GM12878 (cell line): ENCODE measurements at regions of chr2 and their contacts with region 1.

Region 1: DNA sequence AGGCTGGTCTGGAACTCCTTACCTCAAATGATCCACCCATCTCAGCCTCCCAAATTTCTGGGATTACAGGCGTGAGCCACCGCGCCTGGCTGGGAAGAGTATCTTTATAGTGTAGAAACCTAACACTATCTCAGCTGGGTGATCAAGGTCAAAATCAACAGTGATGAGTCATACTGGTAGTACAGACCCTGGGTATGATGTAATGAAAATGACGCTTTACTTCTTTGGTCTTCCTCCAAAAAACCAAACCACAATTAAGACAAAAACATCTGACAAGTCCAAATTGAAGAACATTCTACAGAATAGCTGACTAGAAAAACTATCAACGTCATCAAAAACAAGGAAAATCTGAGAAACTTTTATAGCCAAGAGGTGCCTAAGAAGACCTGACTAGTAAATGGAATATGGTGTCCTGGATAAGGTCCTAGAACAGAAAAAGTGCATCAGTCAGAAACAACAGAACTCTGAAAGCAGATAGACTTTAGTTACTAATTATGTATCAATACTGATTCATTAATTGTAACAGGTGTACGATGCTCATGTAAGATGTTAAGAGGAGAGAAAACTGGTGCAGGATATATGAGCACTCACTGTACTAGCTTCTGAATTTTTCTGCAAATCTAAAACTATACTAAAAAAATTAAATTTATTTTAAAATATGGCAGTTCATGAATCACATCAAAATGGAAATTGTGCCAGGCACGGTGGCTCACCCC is 25.4 kb downstream of the PDCL3 start:
- DNase-seq: peak; percentile 38
- ATAC-seq: peak; percentile 93
- H3K4me3 ChIP-seq: no peak overlapping the region
- H3K27ac ChIP-seq: no peak overlapping the region
- H3K4me1 ChIP-seq: peaks cover 5% of the 10 kb centered on the region; the same call in 1 of the 2 replicates
- H3K27me3 ChIP-seq: no peaks in the 10 kb centered on the region
- CTCF ChIP-seq: no peak
- EP300 ChIP-seq: peak in 1 of 2 experiments; percentile 85; a peak in 1 of 4 replicates
- POLR2A ChIP-seq: no peak
- RAD21 ChIP-seq: no peak

Region 2: DNA sequence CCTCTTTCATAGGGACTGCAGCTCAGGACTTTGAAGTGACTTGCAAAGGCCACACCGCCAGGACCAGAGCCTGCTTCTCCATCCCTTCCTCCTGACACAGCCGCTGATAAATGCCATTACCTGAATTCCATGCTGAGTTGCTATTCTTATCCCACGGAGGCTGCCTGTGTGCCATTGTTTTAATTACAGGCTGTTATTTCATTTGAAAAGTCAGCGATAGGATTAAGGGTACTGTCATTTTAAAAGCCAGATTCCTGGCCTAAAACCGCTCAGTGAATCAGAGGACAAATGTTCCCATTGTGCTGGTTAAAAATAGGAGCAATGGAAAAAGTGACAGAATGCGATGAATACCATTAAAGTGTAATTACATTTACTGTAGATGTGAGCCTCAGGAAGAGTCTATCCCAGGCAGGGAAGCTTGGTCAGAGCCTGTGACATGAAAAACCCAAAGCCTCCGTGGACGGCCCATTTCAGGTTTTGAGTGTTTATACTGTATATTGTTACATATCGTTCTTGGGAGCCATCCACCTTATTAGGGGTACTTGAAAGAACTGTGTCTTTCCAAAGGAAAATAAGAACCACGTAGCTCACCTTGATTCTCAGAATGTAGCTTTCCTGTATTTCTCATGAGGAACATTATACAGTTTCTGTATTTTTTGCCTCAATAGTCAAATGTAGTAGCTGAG is 15.9 kb after region 1 on chr2:
- CTCF ChIA-PET with region 1: interaction called, 14 read pairs
- POLR2A ChIA-PET with region 1: interaction called, 6 read pairs
- RAD21 ChIA-PET with region 1: interaction called, 4 read pairs
- SMC1A ChIA-PET with region 1: no interaction called
- in situ Hi-C with region 1: no loop called
- intact Hi-C with region 1: no loop called
- DNase-seq: no peak
- ATAC-seq: no peak
- H3K4me3 ChIP-seq: no peak overlapping the region
- H3K27ac ChIP-seq: no peak overlapping the region
- H3K4me1 ChIP-seq: no peaks in the 10 kb centered on the region
- H3K27me3 ChIP-seq: no peaks in the 10 kb centered on the region
- CTCF ChIP-seq: no peak
- EP300 ChIP-seq: no peak
- POLR2A ChIP-seq: no peak
- RAD21 ChIP-seq: no peak

Region 3: GRCh38 chr2:100992262-100992661 is 404.0 kb after region 1 on chr2:
- CTCF ChIA-PET with region 1: no interaction called
- POLR2A ChIA-PET with region 1: interaction called, 3 read pairs
- RAD21 ChIA-PET with region 1: no interaction called
- SMC1A ChIA-PET with region 1: no interaction called
- in situ Hi-C with region 1: loop called (anchors 10 kb)
- intact Hi-C with region 1: no loop called
- DNase-seq: no peak
- ATAC-seq: no peak
- H3K4me3 ChIP-seq: no peak overlapping the region
- H3K27ac ChIP-seq: no peak overlapping the region
- H3K4me1 ChIP-seq: no peaks in the 10 kb centered on the region
- H3K27me3 ChIP-seq: no peaks in the 10 kb centered on the region
- CTCF ChIP-seq: no peak
- EP300 ChIP-seq: no peak
- POLR2A ChIP-seq: no peak
- RAD21 ChIP-seq: no peak